Activated CD4-positive, alpha-beta memory T cell treated with anti-CD3 and anti-CD28 coated beads, Interleukin-2, amount 10 ng/mL, durations not matched to agents 7 days and 5 days (primary cell): ENCODE measurements at regions of chr16 and their contacts with region 1.

Region 1: GRCh38 chr16:29700253-29700987 is 21.4 kb downstream of the QPRT start:
- DNase-seq: peak; percentile 85
- H3K4me3 Mint-ChIP-seq: peak overlapping the region; percentile 22
- H3K27ac Mint-ChIP-seq: peak overlapping the region; percentile 70
- H3K4me1 Mint-ChIP-seq: peaks cover 41% of the 10 kb centered on the region
- H3K27me3 Mint-ChIP-seq: no peaks in the 10 kb centered on the region

Region 2: DNA sequence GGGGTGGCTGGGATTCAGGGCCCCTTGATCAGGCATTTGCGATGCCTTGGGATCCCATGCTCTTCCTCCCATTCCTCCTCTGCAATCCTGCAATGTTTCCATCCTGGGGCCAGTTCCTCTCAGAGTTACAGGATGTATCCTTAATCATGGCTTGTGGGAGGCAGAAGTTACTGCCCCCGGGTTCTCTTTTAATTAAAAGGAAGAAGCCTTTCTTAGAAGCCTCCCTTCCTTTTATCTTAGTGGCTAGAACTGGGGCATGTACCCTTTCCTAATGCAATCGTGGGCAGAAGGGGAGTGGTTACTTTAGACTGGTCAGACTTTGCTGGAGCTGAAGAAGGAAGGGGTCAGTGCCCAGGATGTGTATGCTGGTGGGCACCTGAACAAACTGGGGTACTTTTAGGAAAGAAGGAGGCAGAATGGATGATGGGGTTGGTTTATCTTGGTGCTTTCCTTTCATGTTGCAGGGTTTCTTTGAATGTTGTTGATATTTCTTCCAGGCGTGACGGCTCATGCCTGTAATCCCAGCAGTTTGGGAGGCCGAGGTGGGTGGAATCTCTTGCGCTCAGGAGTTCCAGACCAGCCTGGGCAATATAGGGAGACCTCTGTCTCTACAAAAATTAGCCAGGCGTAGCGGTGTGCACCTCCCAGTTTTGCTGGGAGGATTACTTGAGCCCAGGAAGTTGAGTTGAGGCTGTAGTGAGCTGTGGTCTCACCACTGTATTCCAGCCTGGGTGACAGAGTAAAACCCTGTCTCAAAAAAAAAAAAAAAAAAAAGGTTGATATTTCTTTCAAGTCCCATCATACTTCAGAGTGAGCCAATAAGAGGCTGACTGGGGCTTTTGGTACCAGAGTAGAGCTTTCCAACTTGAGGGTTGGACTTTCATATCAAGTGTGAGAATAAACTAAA is 50.6 kb before region 1 on chr16:
- CTCF ChIA-PET with region 1: no interaction called
- POLR2A ChIA-PET with region 1: no interaction called
- DNase-seq: no peak
- H3K4me3 Mint-ChIP-seq: no peak overlapping the region
- H3K27ac Mint-ChIP-seq: no peak overlapping the region
- H3K4me1 Mint-ChIP-seq: peaks cover 25% of the 10 kb centered on the region
- H3K27me3 Mint-ChIP-seq: no peaks in the 10 kb centered on the region

Region 3: GRCh38 chr16:29664091-29664921 is 36.1 kb before region 1 on chr16:
- CTCF ChIA-PET with region 1: interaction called, 3 read pairs
- POLR2A ChIA-PET with region 1: interaction called, 17 read pairs
- DNase-seq: peak; percentile 49
- H3K4me3 Mint-ChIP-seq: peak overlapping the region; percentile 95
- H3K27ac Mint-ChIP-seq: peak overlapping the region; percentile 91
- H3K4me1 Mint-ChIP-seq: peaks cover 50% of the 10 kb centered on the region
- H3K27me3 Mint-ChIP-seq: no peaks in the 10 kb centered on the region

Region 4: DNA sequence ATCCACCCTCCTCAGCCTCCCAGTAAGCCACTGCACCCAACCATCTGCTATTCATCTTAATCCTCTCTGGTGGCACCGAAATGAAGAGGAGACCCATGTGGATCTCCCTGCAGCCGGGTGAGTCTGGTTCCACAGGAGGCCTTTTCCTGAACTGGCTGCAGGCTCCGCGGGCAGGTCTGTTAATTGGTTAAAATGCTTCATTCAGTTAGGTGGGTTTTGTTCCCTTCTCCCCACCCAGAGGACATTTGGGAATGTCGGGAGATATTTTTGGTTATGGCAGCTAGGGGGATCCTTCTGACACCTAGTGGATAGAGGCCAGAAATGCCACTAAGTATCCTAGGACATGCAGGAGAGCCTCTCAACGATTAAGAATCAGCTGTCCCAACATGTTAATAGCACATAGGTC is 28.7 kb after region 1 on chr16:
- CTCF ChIA-PET with region 1: interaction called, 12 read pairs
- POLR2A ChIA-PET with region 1: interaction called, 7 read pairs
- DNase-seq: no peak
- H3K4me3 Mint-ChIP-seq: no peak overlapping the region
- H3K27ac Mint-ChIP-seq: no peak overlapping the region
- H3K4me1 Mint-ChIP-seq: peaks cover 30% of the 10 kb centered on the region
- H3K27me3 Mint-ChIP-seq: peaks cover 16% of the 10 kb centered on the region

Region 5: DNA sequence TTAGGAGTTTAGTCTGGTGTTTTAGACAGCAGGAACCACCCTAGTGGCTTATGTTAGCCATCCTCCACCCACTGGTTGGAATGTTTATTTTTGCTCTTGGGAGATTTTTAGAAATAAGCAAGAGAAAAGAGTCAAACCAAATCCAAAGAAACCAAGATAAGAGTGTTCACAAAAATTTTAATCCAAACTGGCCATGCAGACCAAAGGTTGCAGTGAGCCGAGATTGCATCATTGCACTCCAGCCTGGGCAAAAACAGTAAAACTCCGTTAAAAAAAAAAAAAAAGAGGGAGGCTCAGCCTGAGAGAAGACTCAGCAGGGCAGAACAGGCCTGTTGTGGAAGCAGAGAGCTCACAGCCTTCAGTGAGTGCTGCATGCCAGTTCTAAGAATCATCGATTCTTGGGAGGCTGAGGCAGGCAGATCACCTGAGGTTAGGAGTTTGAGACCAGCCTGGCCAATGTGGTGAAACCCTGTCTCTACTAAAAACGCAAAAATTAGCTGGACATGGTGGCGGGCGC is 57.6 kb after region 1 on chr16:
- CTCF ChIA-PET with region 1: interaction called, 18 read pairs
- POLR2A ChIA-PET with region 1: no interaction called
- DNase-seq: no peak
- H3K4me3 Mint-ChIP-seq: no peak overlapping the region
- H3K27ac Mint-ChIP-seq: no peak overlapping the region
- H3K4me1 Mint-ChIP-seq: peaks cover 19% of the 10 kb centered on the region
- H3K27me3 Mint-ChIP-seq: no peaks in the 10 kb centered on the region

Region 6: DNA sequence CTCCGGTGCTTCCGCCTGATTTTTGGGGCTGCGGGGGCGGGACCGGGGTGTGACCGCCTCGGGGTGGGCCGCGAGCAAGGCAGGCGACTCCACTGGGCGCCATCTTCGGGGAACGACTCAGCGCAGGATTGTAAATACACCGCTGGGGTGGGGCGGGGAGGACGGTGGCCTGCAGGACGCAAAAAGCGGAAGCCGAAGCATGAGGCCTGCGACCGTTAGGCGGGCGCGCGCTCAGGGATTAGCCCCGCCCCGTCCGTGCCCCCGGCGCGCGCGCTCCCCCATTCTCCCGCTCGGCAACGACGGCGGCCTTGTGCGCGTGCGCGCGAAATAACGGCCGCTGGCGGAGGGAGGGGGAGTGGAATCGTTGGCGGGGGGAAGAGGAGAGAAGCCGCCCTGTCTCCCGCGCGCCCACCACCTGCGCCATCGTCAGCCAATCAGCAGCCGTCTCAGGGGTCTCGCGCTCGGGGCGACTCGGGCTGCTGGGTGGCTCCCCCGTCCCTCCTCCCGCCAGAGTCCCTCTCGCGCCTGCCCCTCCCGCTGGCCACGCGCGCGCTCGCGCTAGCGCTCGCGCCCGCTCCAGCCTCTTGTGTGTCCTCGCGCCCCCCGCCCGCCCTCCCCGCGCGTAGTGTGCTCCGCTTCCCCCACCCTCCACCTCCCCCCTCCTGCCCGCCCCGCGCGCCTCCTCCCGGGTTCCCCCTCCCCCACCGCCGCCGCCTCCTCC is 105.1 kb after region 1 on chr16:
- CTCF ChIA-PET with region 1: interaction called, 31 read pairs
- POLR2A ChIA-PET with region 1: interaction called, 86 read pairs
- DNase-seq: peak; percentile 98
- H3K4me3 Mint-ChIP-seq: peak overlapping the region; percentile 87
- H3K27ac Mint-ChIP-seq: peak overlapping the region; percentile 98
- H3K4me1 Mint-ChIP-seq: peaks cover 48% of the 10 kb centered on the region
- H3K27me3 Mint-ChIP-seq: no peaks in the 10 kb centered on the region

Region 7: DNA sequence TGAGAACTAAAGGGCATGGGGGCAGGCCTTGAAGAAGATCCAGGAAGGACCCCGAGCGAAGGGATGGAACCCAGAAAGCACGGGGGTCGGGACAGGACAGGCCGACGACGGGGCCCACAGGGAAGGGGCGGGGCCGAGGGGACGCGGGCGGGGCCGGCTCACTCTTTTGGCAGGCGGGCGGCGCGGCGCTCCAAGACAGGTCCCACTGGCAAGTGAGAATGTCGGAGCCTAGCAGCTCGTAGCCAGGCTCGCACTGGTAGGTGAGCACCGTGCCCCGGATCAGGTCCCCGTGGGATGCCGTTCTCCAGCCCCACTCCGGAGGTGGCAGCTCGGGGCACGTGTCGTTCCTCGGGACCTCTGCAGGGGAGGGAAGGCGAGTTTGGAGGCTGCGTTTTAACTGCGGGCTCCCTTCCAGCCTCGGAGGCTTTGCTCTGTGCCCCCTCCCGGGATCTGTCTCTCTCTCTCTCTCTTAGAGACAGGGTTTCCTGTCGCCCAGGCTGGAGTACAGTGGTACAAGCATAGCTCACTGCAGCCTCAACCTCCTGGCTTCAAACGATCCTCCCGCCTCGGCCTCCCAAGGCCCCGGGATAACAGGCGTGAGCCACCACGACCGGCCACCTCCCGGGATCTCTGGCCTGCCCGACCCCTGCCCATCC is 176.3 kb after region 1 on chr16:
- CTCF ChIA-PET with region 1: no interaction called
- POLR2A ChIA-PET with region 1: no interaction called
- DNase-seq: peak; percentile 44
- H3K4me3 Mint-ChIP-seq: peak overlapping the region; percentile 41
- H3K27ac Mint-ChIP-seq: no peak overlapping the region
- H3K4me1 Mint-ChIP-seq: peaks cover 16% of the 10 kb centered on the region
- H3K27me3 Mint-ChIP-seq: peaks cover 31% of the 10 kb centered on the region

Region 8: DNA sequence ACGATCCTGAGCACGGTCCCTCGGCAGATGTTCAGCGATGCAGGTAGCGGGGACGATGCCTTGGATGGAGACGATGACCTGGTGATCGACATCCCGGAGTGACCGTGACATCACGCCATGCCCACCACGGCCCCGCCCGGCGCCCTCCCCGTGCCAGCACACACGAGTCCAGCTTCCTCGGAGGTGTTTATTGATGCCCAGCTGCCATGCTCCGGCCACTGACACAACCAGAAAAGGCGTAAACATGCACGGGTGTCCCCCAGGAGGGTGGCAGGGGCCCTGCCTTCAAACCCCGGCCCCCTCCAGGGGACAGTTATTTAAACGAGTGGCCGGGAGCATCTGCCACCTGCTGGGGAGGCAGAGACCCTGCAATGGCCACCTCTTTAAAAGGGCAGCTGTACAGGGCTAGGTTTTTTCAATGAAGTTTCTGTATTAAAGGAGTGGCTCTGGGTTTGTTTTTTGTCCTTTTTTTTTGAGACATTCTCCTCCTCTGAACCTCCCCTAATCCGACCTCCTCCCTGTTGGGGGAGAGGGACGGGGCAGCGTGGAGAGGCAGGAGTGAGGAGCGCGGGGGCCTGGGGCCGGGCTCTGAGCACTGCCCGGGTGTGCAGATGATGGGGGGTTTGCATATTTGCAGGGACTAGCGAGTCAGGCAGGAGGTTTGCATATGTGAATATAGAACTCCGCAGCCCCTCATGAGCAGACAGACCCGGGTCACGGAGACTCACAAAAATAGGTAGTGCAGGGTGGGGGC is 305.1 kb after region 1 on chr16:
- CTCF ChIA-PET with region 1: interaction called, 15 read pairs
- POLR2A ChIA-PET with region 1: no interaction called
- DNase-seq: peak; percentile 42
- H3K4me3 Mint-ChIP-seq: no peak overlapping the region
- H3K27ac Mint-ChIP-seq: no peak overlapping the region
- H3K4me1 Mint-ChIP-seq: peaks cover 2% of the 10 kb centered on the region
- H3K27me3 Mint-ChIP-seq: peaks cover 20% of the 10 kb centered on the region